Heart left ventricle (tissue), 16 donors: ENCODE measurements at regions of chr9 and their contacts with region 1.

Region 1: GRCh38 chr9:93761822-93762221 is 185.4 kb downstream of the PHF2 start:
- DNase-seq: no peak
- ATAC-seq: no peak
- H3K4me3 ChIP-seq: no peak overlapping the region
- H3K27ac ChIP-seq: no peak overlapping the region
- H3K4me1 ChIP-seq: no peaks in the 10 kb centered on the region
- H3K27me3 ChIP-seq: peaks cover 0 to 5% (median 0%) of the 10 kb centered on the region in 9 donors
- CTCF ChIP-seq: no peak
- POLR2A ChIP-seq: no peak

Region 2: DNA sequence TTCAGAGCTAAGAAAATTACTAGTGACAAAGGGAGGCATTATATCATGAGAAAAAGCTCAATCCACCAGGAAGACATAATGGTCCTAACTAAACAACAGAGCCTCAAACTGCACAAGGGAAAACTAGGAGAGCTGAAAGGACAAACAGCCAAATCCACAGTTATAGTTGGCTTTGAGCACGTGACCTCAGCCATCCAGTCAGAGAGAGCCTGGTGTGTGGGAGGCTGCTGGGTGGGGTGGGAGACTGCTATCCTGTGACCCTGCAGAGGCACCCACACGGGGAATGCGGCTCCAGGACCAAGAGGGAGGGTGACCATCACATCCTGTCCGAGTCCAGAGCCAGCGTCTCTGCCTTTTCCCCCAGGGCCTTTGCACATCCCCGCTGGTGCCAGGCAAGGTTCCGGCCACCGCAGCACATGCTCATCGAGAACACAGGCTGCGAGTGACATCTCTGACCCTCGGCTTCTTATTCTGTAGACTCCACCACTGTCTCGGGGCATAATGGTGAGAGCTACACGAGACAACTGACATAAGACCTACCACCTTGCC is 40.3 kb before region 1 on chr9:
- intact Hi-C with region 1: loop called in 1 of 10 experiments (anchors 2 kb)
- DNase-seq: no peak
- ATAC-seq: no peak
- H3K4me3 ChIP-seq: no peak overlapping the region
- H3K27ac ChIP-seq: no peak overlapping the region
- H3K4me1 ChIP-seq: no peaks in the 10 kb centered on the region
- H3K27me3 ChIP-seq: peaks cover 0 to 10% (median 0%) of the 10 kb centered on the region in 9 donors
- CTCF ChIP-seq: no peak
- POLR2A ChIP-seq: no peak